ENCODE measurements at regions of chr14 and their contacts with region 1.

Region 1: GRCh38 chr14:103078093-103078749 is 5.8 kb upstream of the LBHD2 start:
- DNase-seq: peak; percentile 85
- H3K4me3 Mint-ChIP-seq: no peak overlapping the region
- H3K27ac Mint-ChIP-seq: no peak overlapping the region
- H3K4me1 Mint-ChIP-seq: no peaks in the 10 kb centered on the region
- H3K27me3 Mint-ChIP-seq: no peaks in the 10 kb centered on the region

Region 2: GRCh38 chr14:102774391-102775153 is 303.6 kb before region 1 on chr14:
- CTCF ChIA-PET with region 1: interaction called, 3 read pairs
- intact Hi-C with region 1: loop called (anchors 5 kb)
- DNase-seq: peak; percentile 81
- H3K4me3 Mint-ChIP-seq: peak overlapping the region; percentile 41
- H3K27ac Mint-ChIP-seq: peak overlapping the region; percentile 86
- H3K4me1 Mint-ChIP-seq: peaks cover 31% of the 10 kb centered on the region
- H3K27me3 Mint-ChIP-seq: no peaks in the 10 kb centered on the region

Region 3: DNA sequence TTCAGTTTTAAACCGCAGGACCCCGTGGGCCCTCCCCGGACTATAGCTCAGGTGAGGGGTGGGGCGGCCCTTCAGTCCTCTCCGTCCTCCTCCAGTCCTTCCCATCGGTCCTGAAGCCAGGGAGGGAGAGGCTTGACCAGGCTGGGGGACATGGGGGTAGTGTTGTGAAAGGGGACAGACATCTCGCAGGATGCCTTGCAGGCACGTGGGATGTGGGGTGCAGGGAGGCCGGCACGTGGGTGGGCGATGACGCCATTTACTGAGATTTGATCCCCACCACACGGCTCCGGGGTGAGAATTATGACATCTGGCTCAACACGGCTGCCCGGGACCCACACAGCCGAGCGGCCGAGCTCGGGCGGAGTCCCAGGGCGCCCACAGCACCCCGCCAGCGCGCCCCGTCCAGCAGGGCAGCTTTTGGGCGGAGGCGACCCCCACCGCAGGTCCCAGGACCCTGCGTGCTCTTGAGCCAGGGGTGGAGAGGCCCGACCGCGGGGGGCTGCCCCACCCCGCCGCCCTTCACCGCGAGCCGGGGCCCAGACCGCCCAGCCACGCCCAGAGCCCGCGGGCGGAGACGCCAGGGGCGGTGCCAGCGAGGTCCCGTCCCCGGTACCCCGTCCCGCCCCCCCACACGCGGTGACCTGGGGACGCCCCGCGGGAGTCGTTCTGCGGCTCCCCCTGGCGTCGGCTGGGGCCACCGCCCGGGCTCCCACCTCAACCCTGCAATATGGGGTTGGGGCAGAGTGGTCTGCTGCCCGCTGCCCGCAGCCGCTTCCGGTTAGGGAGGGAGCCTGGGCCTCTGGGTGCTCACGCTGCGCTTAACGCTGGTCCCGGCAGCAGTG is 13.0 kb after region 1 on chr14:
- CTCF ChIA-PET with region 1: interaction called, 6 read pairs
- intact Hi-C with region 1: loop called (anchors 1 kb)
- DNase-seq: peak; percentile 76
- H3K4me3 Mint-ChIP-seq: peak overlapping the region; percentile 29
- H3K27ac Mint-ChIP-seq: no peak overlapping the region
- H3K4me1 Mint-ChIP-seq: peaks cover 3% of the 10 kb centered on the region
- H3K27me3 Mint-ChIP-seq: no peaks in the 10 kb centered on the region

Region 4: DNA sequence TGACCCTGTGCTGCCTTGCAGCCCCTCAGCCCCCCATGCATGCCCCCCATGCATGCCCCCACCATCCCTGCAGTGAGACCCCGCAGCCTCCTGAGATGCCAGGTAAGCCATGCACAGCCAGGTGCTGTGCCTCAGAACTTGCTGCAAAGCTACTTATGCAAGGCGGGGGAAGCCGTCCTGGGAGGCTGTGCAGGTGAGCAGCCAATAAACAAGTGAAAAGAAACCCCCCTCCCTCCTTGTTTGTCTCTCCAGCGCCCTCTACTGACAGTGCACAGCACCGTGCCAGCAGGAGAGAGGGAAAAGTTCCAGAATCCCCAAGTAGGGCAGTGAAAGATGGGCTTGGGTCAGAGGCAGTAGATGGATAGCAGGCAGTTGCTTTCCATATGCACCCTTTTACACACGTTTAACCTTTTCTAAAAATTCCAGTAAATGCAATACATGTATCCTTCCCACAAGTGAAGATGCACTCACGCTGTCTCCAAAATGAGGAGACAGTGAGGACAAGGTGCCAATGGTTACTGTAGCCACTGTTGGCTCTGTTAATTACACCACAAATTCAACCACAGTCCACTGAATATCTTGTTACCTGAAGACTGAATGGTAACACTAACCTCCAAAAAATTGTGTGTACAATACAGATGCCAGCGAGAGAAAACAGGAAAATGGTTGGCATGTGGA is 63.0 kb after region 1 on chr14:
- CTCF ChIA-PET with region 1: interaction called, 3 read pairs
- intact Hi-C with region 1: loop called (anchors 2 kb)
- DNase-seq: peak; percentile 73
- H3K4me3 Mint-ChIP-seq: no peak overlapping the region
- H3K27ac Mint-ChIP-seq: no peak overlapping the region
- H3K4me1 Mint-ChIP-seq: peaks cover 3% of the 10 kb centered on the region
- H3K27me3 Mint-ChIP-seq: peaks cover 35% of the 10 kb centered on the region

Region 5: DNA sequence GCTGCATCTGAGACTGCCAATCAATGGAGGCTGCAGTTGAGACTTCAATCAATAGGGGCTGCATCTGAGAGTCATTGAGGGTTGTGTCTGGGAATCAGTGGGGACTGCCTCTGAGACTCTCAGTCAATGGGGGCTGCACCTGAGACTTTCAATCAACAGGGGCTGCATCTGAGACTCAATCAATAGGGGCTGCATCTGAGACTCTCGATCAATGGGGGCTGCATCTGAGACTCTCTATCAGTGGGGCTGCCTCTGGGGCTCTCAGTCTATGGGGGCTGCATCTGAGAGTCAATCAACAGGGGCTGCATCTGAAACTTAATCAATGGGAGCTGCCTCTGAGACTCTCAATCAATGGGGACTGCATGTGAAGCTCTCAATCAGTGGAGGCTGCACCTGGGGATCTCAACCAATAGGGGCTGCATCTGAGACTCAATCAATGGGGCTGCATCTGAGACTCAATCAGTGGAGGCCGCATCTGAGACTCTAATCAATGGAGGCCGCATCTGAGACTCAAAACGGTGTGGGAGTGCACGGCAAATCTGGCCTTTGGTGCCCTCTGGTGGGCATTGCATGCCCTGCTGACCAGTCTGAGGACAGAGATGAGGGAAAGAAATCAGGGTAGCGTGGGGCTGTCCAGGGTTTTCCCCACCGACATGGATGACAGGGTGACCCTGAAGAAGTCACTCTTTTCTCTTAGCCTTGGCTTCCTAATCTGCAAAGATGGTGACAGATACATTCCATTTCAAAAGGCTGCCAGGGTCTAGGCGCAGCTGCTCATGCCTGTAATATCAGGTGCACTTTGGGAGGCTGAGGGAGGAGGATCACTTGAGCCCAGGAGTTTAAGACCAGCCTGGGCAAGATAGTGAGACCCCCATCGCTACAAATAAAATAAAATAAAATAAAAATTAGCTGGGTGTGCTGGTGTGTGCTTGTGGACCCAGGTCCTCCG is 214.5 kb after region 1 on chr14:
- CTCF ChIA-PET with region 1: interaction called, 10 read pairs
- intact Hi-C with region 1: loop called (anchors 1 kb)
- DNase-seq: peak; percentile 88
- H3K4me3 Mint-ChIP-seq: no peak overlapping the region
- H3K27ac Mint-ChIP-seq: no peak overlapping the region
- H3K4me1 Mint-ChIP-seq: no peaks in the 10 kb centered on the region
- H3K27me3 Mint-ChIP-seq: peaks cover 8% of the 10 kb centered on the region

Region 6: DNA sequence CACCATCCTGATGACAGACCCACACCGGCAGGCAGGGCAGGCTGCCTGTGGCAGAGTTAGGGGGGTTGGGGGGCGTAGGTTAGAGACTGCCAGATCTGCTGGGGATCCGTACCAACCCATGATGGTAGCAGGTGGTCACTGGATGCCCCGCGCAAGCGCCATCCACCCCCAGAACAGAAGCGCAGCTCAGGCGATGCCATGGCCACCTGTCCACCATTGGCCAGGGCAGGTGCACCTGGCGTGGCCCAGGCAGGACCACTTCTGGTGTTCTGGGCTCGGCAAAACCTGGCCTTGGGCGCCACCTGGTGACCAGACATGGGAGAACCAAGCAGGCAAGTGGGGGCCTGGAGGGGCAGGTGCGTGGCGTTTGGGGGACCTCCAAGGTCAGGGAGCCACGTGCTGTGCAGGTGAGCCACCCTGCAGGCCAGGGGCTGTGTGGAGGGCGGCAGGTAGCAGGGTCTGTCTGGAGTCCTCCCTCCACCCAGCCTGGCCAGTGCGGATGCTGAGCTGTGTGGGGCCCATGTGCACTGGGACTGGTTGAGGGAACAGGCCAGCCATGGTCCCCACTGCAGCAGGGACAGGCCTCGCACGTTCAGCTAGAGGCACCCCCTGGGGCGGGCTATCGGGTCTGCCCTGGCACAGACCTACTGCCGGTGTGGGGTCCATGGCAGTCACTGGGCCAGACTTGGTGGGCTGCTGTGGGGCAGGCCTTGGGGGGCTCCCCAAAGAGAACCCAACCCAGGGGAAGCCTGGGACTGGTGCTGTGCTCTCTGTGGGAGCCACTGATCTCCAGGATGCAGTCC is 468.6 kb after region 1 on chr14:
- CTCF ChIA-PET with region 1: no interaction called
- intact Hi-C with region 1: loop called (anchors 5 kb)
- DNase-seq: peak; percentile 72
- H3K4me3 Mint-ChIP-seq: no peak overlapping the region
- H3K27ac Mint-ChIP-seq: no peak overlapping the region
- H3K4me1 Mint-ChIP-seq: no peaks in the 10 kb centered on the region
- H3K27me3 Mint-ChIP-seq: no peaks in the 10 kb centered on the region